Activated T-helper 1 cell treated with anti-CD3 and anti-CD28 coated beads, Interleukin-12 subunit alpha, Interleukin-12 subunit beta, Interleukin-2, Interleukin-4 antibody, amounts not matched to agents 30 ng/mL and 10 ng/mL and 1 ng/mL, durations not matched to agents 14 hours and 24 hours and 36 hours (primary cell): ENCODE measurements at regions of chr9 and their contacts with region 1.

Region 1: GRCh38 chr9:133103183-133103986 is 17.7 kb downstream of the RALGDS start:
- DNase-seq: peak; percentile 41
- H3K4me3 Mint-ChIP-seq: no peak overlapping the region
- H3K27ac Mint-ChIP-seq: peak overlapping the region; percentile 70
- H3K4me1 Mint-ChIP-seq: no peaks in the 10 kb centered on the region
- H3K27me3 Mint-ChIP-seq: no peaks in the 10 kb centered on the region

Region 2: DNA sequence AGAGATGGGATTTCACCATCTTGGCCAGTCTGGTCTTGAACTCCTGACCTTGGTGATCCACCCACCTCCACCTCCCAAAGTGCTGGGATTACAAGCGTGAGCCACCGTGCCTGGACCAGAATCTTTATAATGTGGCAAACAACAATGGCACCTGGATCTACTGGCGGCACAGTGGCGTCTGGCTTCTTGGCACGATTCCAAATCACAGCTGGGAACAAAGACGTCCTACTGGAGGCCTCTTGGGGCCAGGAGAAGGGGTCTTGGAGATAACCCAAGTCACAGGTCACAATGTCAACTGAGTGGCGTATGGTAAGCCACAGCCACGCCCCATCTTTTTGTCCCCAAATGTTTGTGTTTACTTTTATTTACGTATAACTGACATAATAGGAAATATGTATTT is 1285.8 kb before region 1 on chr9:
- intact Hi-C with region 1: no loop called
- DNase-seq: no peak
- H3K4me3 Mint-ChIP-seq: no peak overlapping the region
- H3K27ac Mint-ChIP-seq: no peak overlapping the region
- H3K4me1 Mint-ChIP-seq: no peaks in the 10 kb centered on the region
- H3K27me3 Mint-ChIP-seq: peaks cover 21% of the 10 kb centered on the region

Region 3: GRCh38 chr9:133048569-133048968 is 54.8 kb before region 1 on chr9:
- intact Hi-C with region 1: loop called (anchors 10 kb)
- DNase-seq: peak; percentile 30
- H3K4me3 Mint-ChIP-seq: no peak overlapping the region
- H3K27ac Mint-ChIP-seq: no peak overlapping the region
- H3K4me1 Mint-ChIP-seq: peaks cover 6% of the 10 kb centered on the region
- H3K27me3 Mint-ChIP-seq: no peaks in the 10 kb centered on the region